CD14-positive monocyte (primary cell): ENCODE measurements at regions of chr19 and their contacts with region 1.

Region 1: DNA sequence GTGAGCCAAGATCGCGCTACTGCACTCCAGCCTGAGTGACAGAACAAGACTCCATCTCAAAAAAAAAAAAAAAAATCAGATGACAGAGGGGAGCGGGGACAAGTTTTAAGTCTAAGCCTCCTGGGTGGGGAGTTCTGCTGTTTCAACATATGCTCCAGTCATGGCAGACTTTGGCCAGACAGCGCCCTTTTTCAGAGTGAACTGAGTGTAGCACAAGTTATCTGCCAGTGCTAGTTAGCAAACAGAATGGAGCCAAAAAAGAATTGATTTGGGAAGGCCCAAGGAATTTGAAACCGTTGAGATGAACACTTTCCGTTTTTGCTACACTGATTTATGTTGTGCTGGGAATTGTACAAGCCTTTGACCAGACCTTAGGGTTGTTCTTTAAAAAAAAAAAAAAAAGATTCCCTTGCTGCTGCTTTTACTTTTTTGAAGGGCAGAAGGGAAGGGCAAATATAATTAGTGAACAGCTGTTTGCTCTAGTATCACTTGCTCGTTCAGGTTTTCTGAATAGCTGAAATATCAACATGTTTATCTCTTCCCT is 5.7 kb downstream of the ACTN4 start:
- DNase-seq: peak; percentile 67 to 87 (median 76)
- H3K4me3 ChIP-seq: peak overlapping the region in 1 of 3 experiments; percentile 98
- H3K4me3 Mint-ChIP-seq: peak overlapping the region in 1 of 2 donors; percentile 66
- H3K27ac ChIP-seq: peak overlapping the region; percentile 96
- H3K27ac Mint-ChIP-seq: peak overlapping the region; percentile 92 to 98 (median 96)
- H3K4me1 ChIP-seq: peaks cover 76 to 87% of the 10 kb centered on the region in 2 donors
- H3K4me1 Mint-ChIP-seq: peaks cover 87% of the 10 kb centered on the region
- H3K27me3 ChIP-seq: no peaks in the 10 kb centered on the region
- H3K27me3 Mint-ChIP-seq: no peaks in the 10 kb centered on the region
- CTCF ChIP-seq: no peak

Region 2: DNA sequence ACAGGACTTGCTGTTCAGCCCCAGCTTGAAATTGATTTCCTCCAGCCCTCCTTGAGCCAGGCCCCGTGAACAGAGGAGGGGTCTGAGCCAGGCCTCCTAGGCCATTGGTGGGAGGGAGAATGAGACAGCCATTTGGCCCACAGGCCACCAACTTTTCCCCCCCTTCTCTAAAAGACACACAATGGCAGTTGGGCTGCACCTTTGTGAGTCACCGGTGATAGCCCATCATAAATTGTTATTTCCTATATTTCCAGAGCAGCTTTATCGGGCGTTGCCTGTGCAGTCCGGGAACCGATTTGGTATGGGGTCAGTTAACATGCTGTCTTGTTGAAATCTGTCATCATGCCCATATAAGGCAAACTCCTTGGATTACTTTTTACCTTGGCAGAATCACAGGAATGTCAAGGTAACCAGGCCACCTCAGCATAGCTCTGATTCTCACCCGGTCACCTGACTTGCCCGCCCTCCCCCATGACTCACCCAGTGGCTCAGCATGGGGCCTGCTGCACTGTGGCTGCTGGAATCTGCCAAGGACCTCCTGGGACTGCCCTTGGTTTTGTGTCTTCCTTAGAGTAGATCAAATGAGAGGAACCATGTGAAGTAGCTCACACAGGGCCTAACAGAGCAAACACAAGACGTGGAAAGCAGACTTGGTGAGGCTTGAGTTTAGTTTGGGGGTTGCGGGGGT is 30.4 kb after region 1 on chr19:
- intact Hi-C with region 1: loop called in 1 of 2 experiments (anchors 2 kb)
- DNase-seq: peak; percentile 77 to 92 (median 80)
- H3K4me3 ChIP-seq: peak overlapping the region in 1 of 3 experiments; percentile 2
- H3K4me3 Mint-ChIP-seq: peak overlapping the region; percentile 34 to 67
- H3K27ac ChIP-seq: peak overlapping the region; percentile 96 to 98
- H3K27ac Mint-ChIP-seq: peak overlapping the region; percentile 95 to 99 (median 97)
- H3K4me1 ChIP-seq: peaks cover 90 to 100% of the 10 kb centered on the region in 2 donors
- H3K4me1 Mint-ChIP-seq: peaks cover 98% of the 10 kb centered on the region
- H3K27me3 ChIP-seq: no peaks in the 10 kb centered on the region
- H3K27me3 Mint-ChIP-seq: no peaks in the 10 kb centered on the region
- CTCF ChIP-seq: no peak